ENCODE measurements at regions of chr6 and their contacts with region 1.

Region 1: GRCh38 chr6:153032255-153032882 is 29.9 kb upstream of the MTRF1L start:
- DNase-seq: no peak
- H3K4me3 ChIP-seq: no peak overlapping the region
- H3K27ac ChIP-seq: no peak overlapping the region
- H3K4me1 ChIP-seq: no peaks in the 10 kb centered on the region
- H3K27me3 ChIP-seq: no peaks in the 10 kb centered on the region
- CTCF ChIP-seq: peak in 3 of 4 experiments; percentile 41 to 56 (median 54)
- POLR2A ChIP-seq: no peak

Region 2: DNA sequence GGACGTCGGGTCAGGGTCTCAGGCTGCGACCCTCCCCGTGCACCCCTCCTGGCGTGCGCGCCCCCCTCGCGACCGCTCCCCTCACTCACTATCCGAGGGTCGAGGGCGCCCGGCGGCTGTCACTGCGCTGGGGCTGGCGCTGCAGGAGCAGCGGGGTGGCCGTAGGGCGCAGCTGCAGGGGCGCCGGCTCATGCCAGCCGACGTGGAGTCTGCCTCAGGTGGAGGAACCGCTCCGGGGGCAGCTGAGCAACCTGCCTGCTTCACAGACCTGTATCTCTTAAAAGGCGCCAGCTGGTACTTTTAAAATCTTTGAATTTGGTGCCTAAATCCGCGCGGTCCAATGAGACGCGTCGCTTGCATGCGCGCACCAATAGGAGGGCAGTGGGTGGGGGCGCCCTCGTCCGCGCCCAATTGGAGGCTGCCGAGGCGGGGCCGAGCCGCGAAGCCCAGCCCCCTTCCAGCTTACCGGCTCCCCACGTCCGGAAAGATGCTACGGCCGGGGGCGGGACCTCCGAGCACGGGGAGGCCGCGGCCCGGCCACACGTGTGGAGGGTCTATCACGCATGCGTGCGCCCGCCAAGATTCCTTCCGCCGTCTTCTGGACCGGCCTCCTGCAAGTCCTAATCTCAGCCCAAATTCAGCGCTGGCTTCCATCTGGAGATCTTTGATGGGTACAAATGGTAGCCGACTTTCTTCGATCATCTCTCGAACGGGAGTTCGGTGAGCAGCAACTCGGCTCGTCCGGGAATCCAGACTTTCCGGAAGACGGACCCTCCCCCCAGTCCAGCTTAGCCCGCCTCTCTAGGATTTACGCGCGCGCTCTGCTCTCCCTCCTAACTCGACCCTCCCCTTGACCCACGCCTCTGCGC is 49.4 kb before region 1 on chr6 and contains the start of gene FBXO5:
- intact Hi-C with region 1: no loop called
- DNase-seq: peak; percentile 97
- H3K4me3 ChIP-seq: peak within 1 kb of the TSS; percentile 61 to 63
- H3K27ac ChIP-seq: peak within 1 kb of the TSS; percentile 85 to 90
- H3K4me1 ChIP-seq: peaks cover 6% of the 10 kb centered on the region
- H3K27me3 ChIP-seq: no peaks in the 10 kb centered on the region
- CTCF ChIP-seq: peak in 1 of 4 experiments; percentile 4
- POLR2A ChIP-seq: no peak
- total RNA-seq, gene FBXO5: 3.0 to 5.2 TPM

Region 3: DNA sequence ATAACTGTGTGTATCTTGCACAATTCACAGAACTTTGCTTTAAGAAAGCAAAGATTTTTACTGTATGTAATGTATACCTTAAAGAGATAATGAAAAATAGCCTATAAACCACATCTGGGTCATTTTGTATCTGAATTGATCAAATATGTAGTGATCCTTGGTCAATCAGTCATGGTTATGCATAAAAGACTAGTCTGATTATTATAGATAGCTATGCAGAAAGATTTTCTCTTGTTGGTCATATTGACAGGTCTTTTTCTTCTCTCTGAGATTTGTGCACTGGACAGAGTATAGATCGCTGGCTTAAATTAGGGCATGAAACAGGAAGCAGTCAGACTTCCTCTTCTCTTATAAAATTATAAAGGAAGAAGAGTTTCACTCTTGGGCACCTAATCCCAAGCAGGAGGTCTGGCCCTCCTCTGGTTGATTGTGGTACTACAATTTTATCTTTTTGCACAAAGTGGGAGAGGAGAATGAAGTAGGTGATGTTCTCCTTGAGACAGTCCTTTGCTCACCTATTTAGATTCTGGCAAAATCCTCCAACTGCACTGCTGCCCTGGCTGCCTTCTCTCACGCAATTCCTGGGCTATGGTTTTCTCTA is 479.6 kb after region 1 on chr6:
- intact Hi-C with region 1: loop called (anchors 5 kb)
- DNase-seq: peak; percentile 7
- H3K4me3 ChIP-seq: no peak overlapping the region
- H3K27ac ChIP-seq: no peak overlapping the region
- H3K4me1 ChIP-seq: no peaks in the 10 kb centered on the region
- H3K27me3 ChIP-seq: no peaks in the 10 kb centered on the region
- CTCF ChIP-seq: peak; percentile 12 to 55 (median 45)
- POLR2A ChIP-seq: no peak